CD4-positive, alpha-beta memory T cell (primary cell): ENCODE measurements at regions of chr5 and their contacts with region 1.

Region 1: GRCh38 chr5:14781106-14781505 is 90.5 kb downstream of the ANKH start:
- DNase-seq: no peak
- H3K4me3 ChIP-seq: no peak overlapping the region
- H3K4me3 Mint-ChIP-seq: no peak overlapping the region
- H3K27ac ChIP-seq: no peak overlapping the region
- H3K27ac Mint-ChIP-seq: peak overlapping the region in 1 of 7 donors; percentile 57
- H3K4me1 ChIP-seq: no peaks in the 10 kb centered on the region
- H3K4me1 Mint-ChIP-seq: peaks cover 26 to 68% (median 42%) of the 10 kb centered on the region in 4 donors
- H3K27me3 ChIP-seq: no peaks in the 10 kb centered on the region
- H3K27me3 Mint-ChIP-seq: no peaks in the 10 kb centered on the region

Region 2: GRCh38 chr5:14794583-14795230 is 13.6 kb after region 1 on chr5:
- CTCF ChIA-PET with region 1: interaction called, 10 read pairs
- POLR2A ChIA-PET with region 1: no interaction called
- intact Hi-C with region 1: no loop called
- DNase-seq: no peak
- H3K4me3 ChIP-seq: no peak overlapping the region
- H3K4me3 Mint-ChIP-seq: peak overlapping the region in 3 of 8 donors; percentile 7 to 43 (median 17)
- H3K27ac ChIP-seq: no peak overlapping the region
- H3K27ac Mint-ChIP-seq: peak overlapping the region in 2 of 7 donors; percentile 5 to 36
- H3K4me1 ChIP-seq: peaks cover 27% of the 10 kb centered on the region
- H3K4me1 Mint-ChIP-seq: peaks cover 45 to 76% (median 56%) of the 10 kb centered on the region in 4 donors
- H3K27me3 ChIP-seq: no peaks in the 10 kb centered on the region
- H3K27me3 Mint-ChIP-seq: no peaks in the 10 kb centered on the region